Caco-2 (cell line): ENCODE measurements at regions of chr21 and their contacts with region 1.

Region 1: GRCh38 chr21:39518138-39518846 is 66.5 kb downstream of the SH3BGR start:
- DNase-seq: peak; percentile 75
- H3K4me3 ChIP-seq: no peak overlapping the region
- H3K4me3 Mint-ChIP-seq: no peak overlapping the region
- H3K27ac Mint-ChIP-seq: no peak overlapping the region
- H3K4me1 ChIP-seq: no peaks in the 10 kb centered on the region
- H3K4me1 Mint-ChIP-seq: no peaks in the 10 kb centered on the region
- H3K27me3 ChIP-seq: no peaks in the 10 kb centered on the region
- H3K27me3 Mint-ChIP-seq: peaks cover 12% of the 10 kb centered on the region
- CTCF ChIP-seq: peak; percentile 85 to 95

Region 2: GRCh38 chr21:39502631-39503030 is 15.7 kb before region 1 on chr21:
- CTCF ChIA-PET with region 1: no interaction called
- POLR2A ChIA-PET with region 1: no interaction called
- intact Hi-C with region 1: no loop called
- DNase-seq: no peak
- H3K4me3 ChIP-seq: no peak overlapping the region
- H3K4me3 Mint-ChIP-seq: no peak overlapping the region
- H3K27ac Mint-ChIP-seq: no peak overlapping the region
- H3K4me1 ChIP-seq: no peaks in the 10 kb centered on the region
- H3K4me1 Mint-ChIP-seq: no peaks in the 10 kb centered on the region
- H3K27me3 ChIP-seq: no peaks in the 10 kb centered on the region; the same call in 1 of the 2 replicates
- H3K27me3 Mint-ChIP-seq: peaks cover 10% of the 10 kb centered on the region
- CTCF ChIP-seq: no peak

Region 3: DNA sequence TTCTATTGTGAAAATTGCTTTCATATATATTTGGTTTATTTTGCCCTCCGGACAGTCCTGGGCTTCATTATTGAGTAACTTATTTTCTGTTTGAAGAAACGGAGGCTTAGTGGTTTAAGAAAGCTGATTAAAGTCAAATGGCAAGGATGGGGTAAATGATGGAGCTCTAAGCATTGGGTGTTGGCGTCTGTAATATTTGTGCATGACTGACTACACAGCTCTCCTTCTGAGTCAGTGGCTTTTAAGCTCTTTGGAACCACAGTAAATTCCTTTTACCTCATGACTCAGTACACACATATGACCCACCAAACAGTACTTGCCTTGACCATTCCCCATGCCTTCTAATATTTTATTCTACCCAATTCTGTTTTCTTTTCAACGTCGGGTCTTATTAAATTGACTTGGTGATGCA is 115.5 kb after region 1 on chr21:
- CTCF ChIA-PET with region 1: no interaction called
- POLR2A ChIA-PET with region 1: no interaction called
- intact Hi-C with region 1: loop called (anchors 5 kb)
- DNase-seq: no peak
- H3K4me3 ChIP-seq: no peak overlapping the region
- H3K4me3 Mint-ChIP-seq: no peak overlapping the region
- H3K27ac Mint-ChIP-seq: no peak overlapping the region
- H3K4me1 ChIP-seq: peaks cover 29% of the 10 kb centered on the region
- H3K4me1 Mint-ChIP-seq: peaks cover 22% of the 10 kb centered on the region
- H3K27me3 ChIP-seq: no peaks in the 10 kb centered on the region
- H3K27me3 Mint-ChIP-seq: no peaks in the 10 kb centered on the region
- CTCF ChIP-seq: no peak

Region 4: GRCh38 chr21:39715804-39716397 is 197.6 kb after region 1 on chr21:
- CTCF ChIA-PET with region 1: interaction called, 5 read pairs
- POLR2A ChIA-PET with region 1: no interaction called
- intact Hi-C with region 1: loop called (anchors 1 kb)
- DNase-seq: peak; percentile 47 to 51
- H3K4me3 ChIP-seq: no peak overlapping the region
- H3K4me3 Mint-ChIP-seq: no peak overlapping the region
- H3K27ac Mint-ChIP-seq: no peak overlapping the region
- H3K4me1 ChIP-seq: no peaks in the 10 kb centered on the region
- H3K4me1 Mint-ChIP-seq: peaks cover 6% of the 10 kb centered on the region
- H3K27me3 ChIP-seq: no peaks in the 10 kb centered on the region
- H3K27me3 Mint-ChIP-seq: peaks cover 6% of the 10 kb centered on the region
- CTCF ChIP-seq: peak; percentile 52 to 77